Activated T-helper 2 cell treated with anti-CD3 and anti-CD28 coated beads, Interferon-gamma antibody, Interleukin-2, Interleukin-4, amounts not matched to agents 10 μg/mL and 5 μg/mL and 100 μg/mL, durations not matched to agents 14 hours and 24 hours and 36 hours (primary cell): ENCODE measurements at regions of chr16 and their contacts with region 1.

Region 1: GRCh38 chr16:3305109-3306068 is at the starts of genes TIGD7 and ZNF75A:
- DNase-seq: peak; percentile 83
- H3K4me3 Mint-ChIP-seq: peak within 1 kb of the TSS; percentile 77
- H3K27ac Mint-ChIP-seq: peak within 1 kb of the TSS; percentile 78
- H3K4me1 Mint-ChIP-seq: peaks cover 8% of the 10 kb centered on the region
- H3K27me3 Mint-ChIP-seq: no peaks in the 10 kb centered on the region
- total RNA-seq, gene TIGD7: 2.5 and 3.6 TPM in 2 replicates
- total RNA-seq, gene ZNF75A: 25.4 and 31.8 TPM in 2 replicates

Region 2: GRCh38 chr16:3383045-3383448 is 77.7 kb after region 1 on chr16:
- intact Hi-C with region 1: no loop called
- DNase-seq: no peak
- H3K4me3 Mint-ChIP-seq: no peak overlapping the region
- H3K27ac Mint-ChIP-seq: no peak overlapping the region
- H3K4me1 Mint-ChIP-seq: no peaks in the 10 kb centered on the region
- H3K27me3 Mint-ChIP-seq: no peaks in the 10 kb centered on the region

Region 3: GRCh38 chr16:3457434-3458252 is 152.3 kb after region 1 on chr16:
- intact Hi-C with region 1: loop called (anchors 2 kb)
- DNase-seq: peak; percentile 86
- H3K4me3 Mint-ChIP-seq: peak overlapping the region; percentile 80
- H3K27ac Mint-ChIP-seq: peak overlapping the region; percentile 70
- H3K4me1 Mint-ChIP-seq: peaks cover 35% of the 10 kb centered on the region
- H3K27me3 Mint-ChIP-seq: no peaks in the 10 kb centered on the region